A673 (cell line): ENCODE measurements at regions of chr4 and their contacts with region 1.

Region 1: GRCh38 chr4:100421361-100421978 is 96.4 kb downstream of the EMCN start:
- DNase-seq: peak; percentile 70
- H3K4me3 ChIP-seq: no peak overlapping the region
- H3K27ac ChIP-seq: no peak overlapping the region
- H3K4me1 ChIP-seq: peaks cover 6% of the 10 kb centered on the region
- H3K27me3 ChIP-seq: no peaks in the 10 kb centered on the region
- CTCF ChIP-seq: peak; percentile 72

Region 2: DNA sequence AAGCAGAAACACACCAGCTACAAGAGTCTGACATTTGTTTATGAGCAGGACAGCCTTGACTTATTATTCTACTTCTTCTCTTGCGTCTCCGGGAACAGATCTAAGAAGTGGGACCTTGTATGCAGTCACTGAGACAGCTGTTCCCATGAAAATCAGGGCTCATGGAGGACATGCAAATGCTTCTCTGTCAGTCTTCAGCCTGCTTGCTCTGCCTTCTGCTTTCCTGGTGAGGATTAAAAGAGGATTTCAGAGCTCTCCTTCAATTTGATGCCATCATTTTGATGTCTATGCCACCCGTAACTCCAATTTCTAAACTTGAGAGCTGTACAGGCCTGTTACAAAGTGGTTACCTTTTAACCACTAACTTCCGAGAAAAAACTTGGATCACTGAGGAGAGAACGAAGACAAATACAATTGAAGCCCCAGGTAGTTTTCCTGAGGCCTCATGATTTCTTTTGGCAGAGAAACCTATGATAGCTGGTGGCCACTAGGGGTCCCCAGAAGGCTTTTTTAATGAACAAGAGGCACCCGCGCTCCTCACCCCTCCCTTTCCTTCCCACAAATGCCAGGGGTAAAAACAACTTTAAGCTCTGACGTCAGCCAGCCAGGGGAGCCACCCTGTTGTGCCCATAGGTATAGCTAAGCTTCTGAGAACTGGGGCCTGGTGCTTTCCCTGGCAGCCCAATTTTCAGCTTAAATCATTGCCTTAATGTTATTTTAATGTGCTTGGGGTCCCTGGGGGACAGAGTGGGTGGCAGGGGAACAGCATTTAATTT is 328.2 kb before region 1 on chr4:
- CTCF ChIA-PET with region 1: interaction called, 3 read pairs
- POLR2A ChIA-PET with region 1: no interaction called
- intact Hi-C with region 1: loop called (anchors 10 kb)
- DNase-seq: peak; percentile 98
- H3K4me3 ChIP-seq: no peak overlapping the region
- H3K27ac ChIP-seq: no peak overlapping the region
- H3K4me1 ChIP-seq: peaks cover 25% of the 10 kb centered on the region
- H3K27me3 ChIP-seq: no peaks in the 10 kb centered on the region
- CTCF ChIP-seq: peak; percentile 86

Region 3: GRCh38 chr4:100649417-100649816 is 227.9 kb after region 1 on chr4:
- CTCF ChIA-PET with region 1: no interaction called
- POLR2A ChIA-PET with region 1: no interaction called
- intact Hi-C with region 1: loop called (anchors 5 kb)
- DNase-seq: peak; percentile 97
- H3K4me3 ChIP-seq: no peak overlapping the region
- H3K27ac ChIP-seq: peak overlapping the region; percentile 6
- H3K4me1 ChIP-seq: peaks cover 34% of the 10 kb centered on the region
- H3K27me3 ChIP-seq: no peaks in the 10 kb centered on the region
- CTCF ChIP-seq: no peak

Region 4: GRCh38 chr4:102263011-102263787 is 1841.7 kb after region 1 on chr4:
- CTCF ChIA-PET with region 1: no interaction called
- POLR2A ChIA-PET with region 1: no interaction called
- intact Hi-C with region 1: loop called (anchors 5 kb)
- DNase-seq: peak; percentile 56
- H3K4me3 ChIP-seq: no peak overlapping the region
- H3K27ac ChIP-seq: no peak overlapping the region
- H3K4me1 ChIP-seq: no peaks in the 10 kb centered on the region
- H3K27me3 ChIP-seq: no peaks in the 10 kb centered on the region
- CTCF ChIP-seq: peak; percentile 64